Activated naive CD4-positive, alpha-beta T cell treated with anti-CD3 and anti-CD28 coated beads for 36 hours (primary cell): ENCODE measurements at regions of chr4 and their contacts with region 1.

Region 1: GRCh38 chr4:124334119-124334518 is 378.4 kb downstream of the ANKRD50 start:
- DNase-seq: peak; percentile 37
- H3K4me3 Mint-ChIP-seq: no peak overlapping the region
- H3K27ac Mint-ChIP-seq: no peak overlapping the region
- H3K4me1 Mint-ChIP-seq: no peaks in the 10 kb centered on the region
- H3K27me3 Mint-ChIP-seq: no peaks in the 10 kb centered on the region

Region 2: DNA sequence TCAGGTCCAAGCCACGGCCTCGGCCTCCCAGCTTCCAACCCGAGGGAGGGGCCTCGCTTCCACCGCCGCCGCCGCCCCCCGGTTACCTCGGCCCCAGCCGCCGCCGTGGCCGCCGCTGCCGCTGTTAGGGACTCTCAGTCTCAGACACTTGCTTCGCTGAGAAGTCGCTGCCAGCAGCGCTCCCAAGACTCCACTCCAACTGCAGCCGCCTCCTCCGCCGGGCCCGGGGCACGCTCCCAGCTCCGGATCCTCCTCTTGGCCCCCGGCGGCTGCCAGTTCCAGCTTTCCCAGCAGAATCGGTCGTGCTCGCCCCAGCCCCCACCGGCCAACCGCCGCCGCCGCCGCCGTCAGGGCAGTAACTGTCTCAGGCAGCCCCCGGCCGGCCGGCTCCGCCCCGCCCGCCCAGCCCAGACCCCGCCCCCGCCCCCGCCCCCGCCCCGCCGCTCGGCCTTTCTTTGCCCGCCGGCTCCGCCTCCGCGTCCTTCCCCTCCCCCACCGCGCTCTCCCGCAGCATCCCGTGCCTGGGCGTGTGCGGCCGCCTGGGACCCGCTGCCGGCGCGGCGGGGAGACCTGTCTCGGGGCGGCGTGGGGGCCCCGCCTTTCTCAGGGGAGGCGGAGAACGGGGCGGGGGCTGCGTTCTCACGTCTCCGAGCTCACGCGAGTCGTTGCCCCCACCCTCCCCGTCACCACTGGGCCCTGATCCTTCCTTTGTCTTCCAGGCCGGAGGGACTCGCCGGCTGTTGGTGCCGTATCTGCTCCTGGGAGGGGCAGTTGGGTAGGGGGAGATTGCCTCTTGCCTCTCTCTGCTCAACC is 378.5 kb after region 1 on chr4 and contains the start of gene ANKRD50:
- CTCF ChIA-PET with region 1: interaction called, 3 read pairs
- intact Hi-C with region 1: loop called (anchors 10 kb)
- DNase-seq: peak; percentile 70
- H3K4me3 Mint-ChIP-seq: peak within 1 kb of the TSS; percentile 84
- H3K27ac Mint-ChIP-seq: no peak within 1 kb of the TSS
- H3K4me1 Mint-ChIP-seq: peaks cover 7% of the 10 kb centered on the region
- H3K27me3 Mint-ChIP-seq: peaks cover 10% of the 10 kb centered on the region
- total RNA-seq, gene ANKRD50: 0.57 to 0.74 TPM

Region 3: GRCh38 chr4:125283707-125284279 is 949.7 kb after region 1 on chr4:
- CTCF ChIA-PET with region 1: interaction called, 10 read pairs
- intact Hi-C with region 1: loop called (anchors 1 kb)
- DNase-seq: peak; percentile 5
- H3K4me3 Mint-ChIP-seq: no peak overlapping the region
- H3K27ac Mint-ChIP-seq: no peak overlapping the region
- H3K4me1 Mint-ChIP-seq: no peaks in the 10 kb centered on the region
- H3K27me3 Mint-ChIP-seq: peaks cover 1% of the 10 kb centered on the region